CD14-positive monocyte (primary cell): ENCODE measurements at regions of chr6 and their contacts with region 1.

Region 1: DNA sequence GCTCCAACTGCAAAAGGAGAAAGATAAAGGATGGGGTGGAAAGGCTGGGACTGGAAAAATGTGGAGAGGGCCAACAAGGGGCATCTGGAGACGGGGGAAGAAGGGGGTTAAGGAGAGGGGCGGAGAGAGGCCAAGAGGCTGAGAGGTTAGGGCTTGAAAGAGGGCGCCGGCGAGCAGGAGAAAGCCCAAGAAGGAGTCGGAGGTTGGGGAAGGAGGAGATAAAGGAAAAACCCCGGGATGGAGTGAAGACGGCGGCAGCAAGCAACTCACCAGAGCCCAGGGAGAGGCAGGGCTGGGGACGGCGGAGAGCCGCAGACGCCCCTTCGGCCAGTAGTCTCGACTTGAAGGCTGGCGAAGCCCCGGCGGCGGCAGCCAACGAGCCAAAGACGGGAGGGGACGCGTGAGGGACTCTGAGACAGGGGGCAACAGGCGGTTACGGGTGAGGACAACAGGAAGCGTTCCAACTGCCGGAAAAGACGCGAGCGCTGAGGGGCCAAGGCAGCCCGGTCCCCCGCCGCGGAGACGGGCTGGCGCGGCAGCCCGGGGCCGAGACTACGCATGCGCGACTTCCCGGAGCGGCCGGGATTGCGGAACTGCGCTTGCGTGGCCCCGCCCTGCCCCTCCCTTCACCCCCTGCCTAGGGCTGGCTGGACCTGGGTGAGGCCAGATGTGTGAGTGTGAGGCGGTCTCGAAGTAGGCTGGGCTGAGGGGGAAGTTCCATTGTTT is at the start of gene STK38:
- DNase-seq: peak; percentile 91 to 95 (median 91)
- H3K4me3 ChIP-seq: peak within 1 kb of the TSS; percentile 77 to 100 (median 96)
- H3K4me3 Mint-ChIP-seq: peak within 1 kb of the TSS; percentile 98 to 99
- H3K27ac ChIP-seq: peak within 1 kb of the TSS; percentile 64 to 90
- H3K27ac Mint-ChIP-seq: peak within 1 kb of the TSS; percentile 93 to 99 (median 95)
- H3K4me1 ChIP-seq: peaks cover 40 to 59% of the 10 kb centered on the region in 2 donors
- H3K4me1 Mint-ChIP-seq: peaks cover 49% of the 10 kb centered on the region
- H3K27me3 ChIP-seq: no peaks in the 10 kb centered on the region
- H3K27me3 Mint-ChIP-seq: peaks cover 0 to 3% (median 0%) of the 10 kb centered on the region in 3 donors
- CTCF ChIP-seq: peak; percentile 8
- polyA plus RNA-seq, gene STK38: 57.1 to 95.7 (median 58.4) TPM

Region 2: GRCh38 chr6:35259194-35259947 is 1287.7 kb before region 1 on chr6 and contains the start of gene ZNF76:
- intact Hi-C with region 1: loop called in 1 of 2 experiments (anchors 5 kb)
- DNase-seq: peak; percentile 94 to 96 (median 96)
- H3K4me3 ChIP-seq: peak within 1 kb of the TSS; percentile 44 to 86 (median 62)
- H3K4me3 Mint-ChIP-seq: peak within 1 kb of the TSS; percentile 97 to 98
- H3K27ac ChIP-seq: peak within 1 kb of the TSS; percentile 84 to 93
- H3K27ac Mint-ChIP-seq: peak within 1 kb of the TSS; percentile 97 to 99 (median 99)
- H3K4me1 ChIP-seq: peaks cover 36 to 44% of the 10 kb centered on the region in 2 donors
- H3K4me1 Mint-ChIP-seq: peaks cover 45% of the 10 kb centered on the region
- H3K27me3 ChIP-seq: no peaks in the 10 kb centered on the region
- H3K27me3 Mint-ChIP-seq: peaks cover 0 to 2% (median 1%) of the 10 kb centered on the region in 3 donors
- CTCF ChIP-seq: no peak
- polyA plus RNA-seq, gene ZNF76: 6.8 to 49.7 (median 9.6) TPM

Region 3: GRCh38 chr6:36442671-36443470 is 104.2 kb before region 1 on chr6 and contains the starts of genes KCTD20 and PXT1:
- intact Hi-C with region 1: loop called in 1 of 2 experiments (anchors 10 kb)
- DNase-seq: peak; percentile 80 to 88 (median 84)
- H3K4me3 ChIP-seq: peak within 1 kb of the TSS; percentile 81 to 98 (median 97)
- H3K4me3 Mint-ChIP-seq: peak within 1 kb of the TSS; percentile 98 to 100
- H3K27ac ChIP-seq: peak within 1 kb of the TSS; percentile 91 to 99
- H3K27ac Mint-ChIP-seq: peak within 1 kb of the TSS; percentile 98 to 100 (median 99)
- H3K4me1 ChIP-seq: peaks cover 36 to 40% of the 10 kb centered on the region in 2 donors
- H3K4me1 Mint-ChIP-seq: peaks cover 44% of the 10 kb centered on the region
- H3K27me3 ChIP-seq: no peaks in the 10 kb centered on the region
- H3K27me3 Mint-ChIP-seq: no peaks in the 10 kb centered on the region
- CTCF ChIP-seq: no peak
- polyA plus RNA-seq, gene KCTD20: 23.7 to 79.7 (median 73.9) TPM
- polyA plus RNA-seq, gene PXT1: 0.13 to 0.31 (median 0.24) TPM

Region 4: DNA sequence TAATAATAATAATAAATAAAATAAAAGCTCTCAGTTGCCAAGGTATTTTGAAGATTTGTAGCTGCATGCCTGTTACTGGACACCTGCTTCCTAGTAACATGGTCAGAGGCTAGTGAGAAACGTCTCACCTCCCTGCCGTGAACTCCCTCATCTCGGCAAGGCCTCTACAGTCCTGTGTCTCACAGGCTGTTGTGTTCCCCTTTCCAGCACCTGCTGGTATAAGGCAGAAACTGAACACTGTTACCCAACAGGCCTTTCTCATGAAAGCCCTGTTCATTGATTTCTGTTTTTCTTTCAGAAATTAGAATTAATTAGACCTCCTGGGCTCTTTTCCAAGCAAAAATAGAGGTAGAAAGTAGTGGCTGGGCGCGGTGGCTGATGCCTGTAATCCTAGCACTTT is 29.5 kb after region 1 on chr6:
- intact Hi-C with region 1: loop called in 1 of 2 experiments (anchors 5 kb)
- DNase-seq: peak in 2 of 3 donors; percentile 40 to 42
- H3K4me3 ChIP-seq: no peak overlapping the region
- H3K4me3 Mint-ChIP-seq: no peak overlapping the region
- H3K27ac ChIP-seq: peak overlapping the region in 1 of 2 donors; percentile 16
- H3K27ac Mint-ChIP-seq: peak overlapping the region in 4 of 7 donors; percentile 36 to 73 (median 52)
- H3K4me1 ChIP-seq: peaks cover 27 to 31% of the 10 kb centered on the region in 2 donors
- H3K4me1 Mint-ChIP-seq: peaks cover 34% of the 10 kb centered on the region
- H3K27me3 ChIP-seq: no peaks in the 10 kb centered on the region
- H3K27me3 Mint-ChIP-seq: no peaks in the 10 kb centered on the region
- CTCF ChIP-seq: peak; percentile 10

Region 5: DNA sequence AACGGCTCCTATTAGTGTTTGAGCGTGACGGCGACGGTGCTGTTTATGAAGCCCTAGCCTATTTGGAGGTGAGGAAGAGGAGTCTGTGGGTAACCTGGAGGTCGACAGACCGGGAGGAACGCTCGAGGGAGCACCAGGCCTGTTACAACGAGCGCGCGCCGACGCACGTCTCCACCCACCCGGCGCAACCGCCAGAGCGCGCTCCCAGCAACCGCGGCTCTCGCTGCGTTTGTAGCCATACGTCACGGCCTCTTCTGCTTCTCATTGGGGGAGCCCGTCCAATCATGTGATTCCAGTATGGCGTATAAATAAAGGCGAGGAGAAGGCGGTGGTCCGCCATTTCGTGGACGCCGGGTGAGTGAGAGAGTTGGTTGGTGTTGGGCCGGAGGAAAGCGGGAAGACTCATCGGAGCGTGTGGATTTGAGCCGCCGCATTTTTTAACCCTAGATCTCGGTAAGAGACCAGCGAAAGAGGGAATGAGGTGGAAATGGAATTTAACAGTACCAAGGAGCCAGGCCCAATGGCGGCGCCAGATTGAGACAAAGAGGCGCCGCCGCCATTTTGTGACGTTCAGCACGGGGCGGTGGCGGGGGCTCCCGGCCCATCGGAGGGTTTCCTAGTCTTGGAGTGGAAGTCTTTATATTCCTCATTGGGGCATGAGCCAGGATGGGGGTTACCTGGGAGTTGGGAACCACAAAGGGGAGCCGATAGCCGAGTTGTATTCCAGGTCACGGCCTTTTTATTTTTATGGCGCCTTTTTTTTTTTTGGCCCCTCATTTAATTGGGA is 47.1 kb after region 1 on chr6 and contains the start of gene SRSF3:
- intact Hi-C with region 1: loop called (anchors 2 to 5 kb)
- DNase-seq: peak; percentile 97 to 98 (median 98)
- H3K4me3 ChIP-seq: peak within 1 kb of the TSS; percentile 96 to 100 (median 99)
- H3K4me3 Mint-ChIP-seq: peak within 1 kb of the TSS; percentile 93 to 94
- H3K27ac ChIP-seq: peak within 1 kb of the TSS; percentile 95 to 96
- H3K27ac Mint-ChIP-seq: peak within 1 kb of the TSS; percentile 99 to 100 (median 100)
- H3K4me1 ChIP-seq: peaks cover 41 to 47% of the 10 kb centered on the region in 2 donors
- H3K4me1 Mint-ChIP-seq: peaks cover 39% of the 10 kb centered on the region
- H3K27me3 ChIP-seq: no peaks in the 10 kb centered on the region
- H3K27me3 Mint-ChIP-seq: peaks cover 0 to 7% (median 2%) of the 10 kb centered on the region in 3 donors
- CTCF ChIP-seq: peak; percentile 48
- polyA plus RNA-seq, gene SRSF3: 293 to 341 (median 297) TPM